ENCODE measurements at regions of chr16 and their contacts with region 1.

Region 1: DNA sequence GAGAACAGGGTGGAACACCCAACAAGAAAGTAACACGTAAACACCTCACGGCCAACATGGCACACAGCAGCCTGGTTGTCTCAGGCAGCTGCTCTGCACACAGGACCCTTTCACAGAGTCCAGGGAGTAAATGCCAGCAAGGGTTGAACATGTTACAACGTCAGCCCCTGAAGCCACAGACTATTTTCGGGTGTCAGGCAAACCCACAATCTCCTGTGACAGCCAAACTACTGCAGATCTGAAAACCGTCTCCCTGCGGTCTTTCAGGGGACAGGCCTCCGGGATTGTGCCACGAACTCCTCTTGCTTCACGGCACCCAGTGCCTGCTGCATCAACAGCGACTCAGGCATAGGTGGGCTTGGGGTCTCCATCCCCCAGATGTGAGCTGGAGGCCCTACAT is 127.7 kb downstream of the XYLT1 start:
- DNase-seq: peak; percentile 83
- ATAC-seq: peak; percentile 64
- H3K4me3 Mint-ChIP-seq: peak overlapping the region; percentile 74
- H3K27ac Mint-ChIP-seq: peak overlapping the region; percentile 94
- H3K4me1 Mint-ChIP-seq: peaks cover 94% of the 10 kb centered on the region
- H3K27me3 Mint-ChIP-seq: no peaks in the 10 kb centered on the region

Region 2: DNA sequence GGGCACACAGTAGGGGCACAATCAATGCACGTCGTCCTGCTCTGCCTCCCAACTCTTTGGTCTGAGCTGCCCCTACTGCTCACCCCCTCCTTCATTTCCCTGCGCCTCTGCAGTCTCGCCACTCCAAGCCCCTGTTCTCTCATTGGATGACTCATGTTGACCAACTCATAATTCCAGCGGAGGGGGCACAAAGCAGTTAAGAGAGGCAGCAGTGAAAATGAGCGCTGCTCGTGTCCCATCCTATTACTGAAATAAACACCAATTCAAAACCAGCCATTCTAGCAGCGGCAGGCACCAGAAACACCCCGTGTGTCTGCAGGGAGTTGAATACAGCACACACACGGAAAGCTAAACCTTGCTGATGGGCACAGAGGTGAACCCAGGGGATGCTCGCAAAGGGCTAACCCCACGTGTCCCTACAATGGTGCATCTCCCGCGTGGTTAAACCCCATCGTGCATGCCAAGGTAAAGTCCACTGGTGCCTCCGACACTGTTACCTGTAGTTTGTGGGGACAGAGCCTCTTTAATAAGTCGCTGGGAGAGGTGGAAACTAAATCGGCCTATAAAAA is 182.7 kb before region 1 on chr16:
- CTCF ChIA-PET with region 1: no interaction called
- POLR2A ChIA-PET with region 1: no interaction called
- DNase-seq: no peak
- ATAC-seq: no peak
- H3K4me3 Mint-ChIP-seq: no peak overlapping the region
- H3K27ac Mint-ChIP-seq: no peak overlapping the region
- H3K4me1 Mint-ChIP-seq: peaks cover 6% of the 10 kb centered on the region
- H3K27me3 Mint-ChIP-seq: no peaks in the 10 kb centered on the region

Region 3: GRCh38 chr16:17321824-17322223 is 21.2 kb before region 1 on chr16:
- CTCF ChIA-PET with region 1: no interaction called
- POLR2A ChIA-PET with region 1: no interaction called
- DNase-seq: no peak
- ATAC-seq: no peak
- H3K4me3 Mint-ChIP-seq: no peak overlapping the region
- H3K27ac Mint-ChIP-seq: no peak overlapping the region
- H3K4me1 Mint-ChIP-seq: peaks cover 24% of the 10 kb centered on the region
- H3K27me3 Mint-ChIP-seq: no peaks in the 10 kb centered on the region

Region 4: DNA sequence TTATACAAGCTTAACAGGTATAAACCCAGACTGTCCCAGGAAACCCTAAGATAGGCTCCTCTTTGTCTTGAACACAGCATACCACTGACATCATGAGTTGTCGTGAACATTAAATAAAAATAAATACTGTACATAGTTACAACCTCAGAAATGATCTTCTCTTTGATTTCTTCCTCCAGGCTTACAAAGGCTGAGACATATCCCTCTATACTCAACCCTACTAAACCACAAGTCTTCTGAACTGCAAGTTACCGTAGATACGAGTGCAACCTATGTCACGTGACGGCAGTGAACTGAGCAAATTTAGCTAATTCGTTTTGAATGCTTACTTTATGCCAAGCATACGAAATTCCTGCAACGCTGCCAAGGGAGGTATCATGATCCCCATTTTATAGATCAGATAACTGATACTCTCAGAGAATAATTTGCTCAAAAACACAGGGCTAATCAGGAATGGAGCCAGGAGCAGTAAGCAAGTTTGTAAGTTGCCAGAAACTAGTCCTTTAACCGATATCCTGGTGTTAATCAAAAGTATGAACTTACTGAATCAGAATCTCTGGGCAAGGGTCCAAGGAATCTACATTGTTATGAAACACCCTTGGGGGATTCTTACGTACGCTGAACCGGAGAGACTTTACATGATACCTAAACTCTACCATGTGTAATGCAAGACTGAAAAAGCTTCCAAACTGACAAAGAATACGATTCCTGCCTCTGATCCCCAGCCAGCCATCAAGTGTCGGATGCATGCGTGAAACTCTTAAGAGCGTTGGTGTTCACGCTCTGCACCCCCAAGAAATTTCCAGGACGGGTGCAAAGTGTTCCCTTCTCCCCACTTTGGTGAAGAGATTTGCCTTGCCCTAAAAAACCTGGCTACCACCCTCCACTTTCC is 21.5 kb after region 1 on chr16:
- CTCF ChIA-PET with region 1: interaction called, 142 read pairs
- POLR2A ChIA-PET with region 1: interaction called, 49 read pairs
- DNase-seq: peak; percentile 78
- ATAC-seq: peak; percentile 76
- H3K4me3 Mint-ChIP-seq: peak overlapping the region; percentile 38
- H3K27ac Mint-ChIP-seq: peak overlapping the region; percentile 85
- H3K4me1 Mint-ChIP-seq: peaks cover 98% of the 10 kb centered on the region
- H3K27me3 Mint-ChIP-seq: no peaks in the 10 kb centered on the region

Region 5: GRCh38 chr16:17369421-17370222 is 26.6 kb after region 1 on chr16:
- CTCF ChIA-PET with region 1: interaction called, 142 read pairs
- POLR2A ChIA-PET with region 1: interaction called, 49 read pairs
- DNase-seq: peak; percentile 88
- ATAC-seq: peak; percentile 85
- H3K4me3 Mint-ChIP-seq: peak overlapping the region; percentile 80
- H3K27ac Mint-ChIP-seq: peak overlapping the region; percentile 99
- H3K4me1 Mint-ChIP-seq: peaks cover 93% of the 10 kb centered on the region
- H3K27me3 Mint-ChIP-seq: no peaks in the 10 kb centered on the region

Region 6: DNA sequence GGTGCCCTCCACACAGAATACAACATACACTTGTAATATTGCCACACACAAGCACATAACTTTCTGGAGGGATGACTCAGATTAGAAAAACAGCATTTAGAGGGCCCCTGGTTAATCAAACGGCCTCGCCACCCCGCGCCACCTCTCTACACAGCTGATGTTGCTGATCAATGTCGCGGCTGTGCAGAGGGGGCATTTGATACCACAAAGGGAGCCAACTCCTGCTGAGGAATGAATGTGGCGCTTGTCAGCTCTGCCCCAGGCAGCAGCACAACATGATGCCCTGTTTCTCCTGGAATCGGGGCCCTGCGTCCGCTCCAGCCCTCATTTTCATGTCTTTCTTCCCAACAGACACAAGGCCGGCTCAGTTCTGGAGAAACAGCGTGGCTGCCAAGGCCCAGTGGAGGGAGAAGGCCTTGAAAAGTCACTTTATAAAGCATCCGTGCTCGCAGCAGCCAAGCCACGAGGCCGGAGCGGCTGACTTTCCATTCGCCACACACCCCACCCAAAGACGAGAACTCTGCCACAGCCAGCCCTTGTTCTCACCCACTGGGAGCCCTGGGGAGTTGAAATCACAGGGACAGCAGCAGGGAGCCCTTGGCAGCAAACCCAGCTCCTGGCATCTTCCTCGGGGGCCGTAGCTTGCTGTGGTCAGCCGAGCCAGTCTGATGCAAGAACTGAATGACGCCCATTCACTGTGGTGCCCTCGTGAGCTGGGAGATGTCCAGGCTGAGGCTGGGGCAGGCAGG is 62.1 kb after region 1 on chr16:
- CTCF ChIA-PET with region 1: no interaction called
- POLR2A ChIA-PET with region 1: no interaction called
- DNase-seq: no peak
- ATAC-seq: no peak
- H3K4me3 Mint-ChIP-seq: no peak overlapping the region
- H3K27ac Mint-ChIP-seq: peak overlapping the region; percentile 34
- H3K4me1 Mint-ChIP-seq: peaks cover 29% of the 10 kb centered on the region
- H3K27me3 Mint-ChIP-seq: no peaks in the 10 kb centered on the region